ENCODE measurements at regions of chr4 and their contacts with region 1.

Region 1: GRCh38 chr4:121696581-121697461 is at the start of gene ANXA5:
- DNase-seq: peak; percentile 97
- H3K4me3 ChIP-seq: peak within 1 kb of the TSS; percentile 83 to 98 (median 96)
- H3K27ac ChIP-seq: peak within 1 kb of the TSS; percentile 95 to 99 (median 98)
- H3K4me1 ChIP-seq: peaks cover 42 to 56% (median 50%) of the 10 kb centered on the region in 4 donors
- H3K27me3 ChIP-seq: no peaks in the 10 kb centered on the region
- CTCF ChIP-seq: peak; percentile 51 to 68 (median 56)
- EP300 ChIP-seq: no peak
- POLR2A ChIP-seq: peak; percentile 51
- total RNA-seq, gene ANXA5: 242 to 338 (median 270) TPM

Region 2: DNA sequence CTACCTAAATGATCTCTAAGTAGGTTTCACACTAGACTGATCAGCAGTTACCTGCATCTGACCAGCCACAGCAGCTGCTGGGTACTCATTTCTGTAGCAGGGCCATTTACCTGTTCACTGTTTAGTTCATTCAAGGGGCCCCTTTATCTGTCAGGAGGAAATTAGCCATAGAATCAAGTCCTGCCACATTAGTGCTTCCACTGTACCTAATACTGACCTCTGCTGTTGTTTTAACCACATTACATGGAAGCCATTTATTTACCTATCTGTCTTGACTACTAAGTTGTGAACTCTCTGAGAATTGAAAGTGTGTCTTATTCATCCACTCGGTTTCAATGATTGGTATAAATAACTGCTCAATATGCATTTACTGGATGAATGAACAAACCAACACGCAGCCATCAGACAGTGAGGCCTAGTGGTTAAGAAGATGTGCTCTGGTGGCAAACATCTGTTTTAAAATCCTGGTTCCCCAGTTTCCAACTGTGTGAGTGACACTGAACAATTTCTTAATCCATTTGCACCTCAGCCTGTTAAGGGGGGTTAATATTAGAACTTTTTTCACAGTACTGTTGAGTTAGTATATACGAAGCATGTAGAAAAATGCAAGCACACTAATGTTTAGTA is 29.9 kb after region 1 on chr4:
- intact Hi-C with region 1: loop called (anchors 2 kb)
- DNase-seq: no peak
- H3K4me3 ChIP-seq: no peak overlapping the region
- H3K27ac ChIP-seq: no peak overlapping the region
- H3K4me1 ChIP-seq: no peaks in the 10 kb centered on the region
- H3K27me3 ChIP-seq: no peaks in the 10 kb centered on the region
- CTCF ChIP-seq: peak; percentile 67 to 84 (median 74)
- EP300 ChIP-seq: no peak
- POLR2A ChIP-seq: no peak

Region 3: DNA sequence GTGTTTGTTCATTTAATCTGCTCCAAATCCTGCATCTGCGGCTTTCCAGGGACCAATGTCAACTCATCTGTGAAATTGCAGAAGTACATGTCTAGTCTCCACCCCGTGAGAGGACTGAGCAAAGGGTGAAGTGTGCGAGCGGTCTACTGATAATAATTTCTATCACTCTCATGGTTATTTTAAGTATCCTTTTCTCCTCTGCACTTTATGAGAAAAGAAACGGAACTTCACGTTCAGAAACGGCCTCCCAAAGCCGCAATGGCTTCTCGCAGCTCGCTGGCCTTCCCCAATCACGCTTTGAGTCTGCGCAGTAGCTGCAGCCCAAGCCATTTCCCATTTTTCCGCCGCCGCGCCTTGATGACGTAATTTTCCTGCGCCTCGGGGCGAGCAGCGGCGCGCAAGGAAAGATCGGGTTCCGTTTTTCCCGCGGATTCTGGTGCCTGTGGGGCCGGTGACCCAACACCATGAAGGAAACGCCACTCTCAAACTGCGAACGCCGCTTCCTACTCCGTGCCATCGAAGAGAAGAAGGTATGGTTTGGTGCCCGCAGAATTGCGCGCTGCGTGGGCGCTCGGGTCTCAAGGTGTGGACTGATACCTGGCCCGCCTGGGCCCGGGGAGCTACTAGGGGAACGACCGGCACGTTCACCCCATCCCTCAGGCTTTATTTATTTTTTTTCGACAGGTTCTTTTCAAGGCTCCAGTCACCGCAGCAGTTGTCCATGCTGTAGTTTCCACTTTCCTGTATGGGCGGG is 104.3 kb after region 1 on chr4 and contains the start of gene EXOSC9:
- intact Hi-C with region 1: loop called (anchors 5 kb)
- DNase-seq: peak; percentile 96
- H3K4me3 ChIP-seq: peak within 1 kb of the TSS; percentile 70 to 91 (median 74)
- H3K27ac ChIP-seq: peak within 1 kb of the TSS; percentile 87 to 92 (median 90)
- H3K4me1 ChIP-seq: peaks cover 6 to 25% (median 20%) of the 10 kb centered on the region in 4 donors
- H3K27me3 ChIP-seq: no peaks in the 10 kb centered on the region
- CTCF ChIP-seq: peak in 1 of 3 experiments; percentile 23
- EP300 ChIP-seq: no peak
- POLR2A ChIP-seq: no peak
- total RNA-seq, gene EXOSC9: 10.1 to 21.6 (median 13.9) TPM